Heart left ventricle (tissue), 16 donors: ENCODE measurements at regions of chr11 and their contacts with region 1.

Region 1: GRCh38 chr11:69888483-69889076 is 69.4 kb upstream of the FGF3 start:
- DNase-seq: peak in 2 of 5 donors; percentile 54 to 59
- ATAC-seq: peak in 2 of 4 donors; percentile 61 to 71
- H3K4me3 ChIP-seq: no peak overlapping the region
- H3K27ac ChIP-seq: no peak overlapping the region
- H3K4me1 ChIP-seq: peaks cover 0 to 8% (median 0%) of the 10 kb centered on the region in 12 donors
- H3K27me3 ChIP-seq: peaks cover 0 to 52% (median 16%) of the 10 kb centered on the region in 9 donors
- CTCF ChIP-seq: peak; percentile 74 to 95 (median 86)
- POLR2A ChIP-seq: no peak

Region 2: DNA sequence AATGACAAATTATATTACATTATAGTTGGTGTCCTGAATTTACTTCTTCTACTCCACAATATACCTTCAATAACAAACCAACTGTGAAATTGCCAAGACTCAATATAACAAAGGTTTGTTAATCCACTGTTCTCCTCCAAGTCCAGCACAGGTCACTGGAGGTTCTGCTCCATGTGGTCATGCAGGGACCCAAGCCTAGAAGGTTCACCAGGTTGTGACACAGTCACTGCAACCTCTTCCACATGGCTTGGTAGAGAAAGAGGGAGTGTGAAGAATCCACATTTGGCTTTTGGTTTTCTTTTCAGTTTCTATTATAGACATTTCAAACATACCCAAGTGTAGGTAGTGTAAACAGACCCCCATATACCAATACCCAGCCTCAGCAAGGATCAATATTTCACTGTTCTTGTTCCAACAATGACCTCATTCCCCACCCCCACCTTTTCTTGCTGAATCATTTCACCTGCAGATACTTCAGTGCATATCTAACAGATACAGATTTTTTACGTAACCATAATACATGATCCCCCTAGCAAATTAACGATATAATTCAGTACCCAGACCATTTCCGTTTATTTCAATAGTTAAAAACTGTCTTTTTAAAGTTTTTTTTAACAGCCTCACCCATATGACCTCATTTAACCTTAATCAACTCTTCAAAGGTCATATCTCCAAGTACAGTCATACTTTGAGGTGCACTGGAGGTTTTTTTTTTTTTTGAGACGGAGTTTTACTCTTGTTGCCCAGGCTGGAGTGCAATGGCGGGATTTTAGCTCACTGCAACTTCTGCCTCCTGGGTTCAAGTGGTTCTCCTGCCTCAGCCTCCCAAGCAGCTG is 198.9 kb before region 1 on chr11:
- intact Hi-C with region 1: loop called (anchors 1 to 5 kb)
- DNase-seq: no peak
- ATAC-seq: no peak
- H3K4me3 ChIP-seq: no peak overlapping the region
- H3K27ac ChIP-seq: no peak overlapping the region
- H3K4me1 ChIP-seq: peaks cover 0 to 7% (median 0%) of the 10 kb centered on the region in 12 donors
- H3K27me3 ChIP-seq: peaks cover 0 to 27% (median 3%) of the 10 kb centered on the region in 9 donors
- CTCF ChIP-seq: no peak
- POLR2A ChIP-seq: no peak

Region 3: DNA sequence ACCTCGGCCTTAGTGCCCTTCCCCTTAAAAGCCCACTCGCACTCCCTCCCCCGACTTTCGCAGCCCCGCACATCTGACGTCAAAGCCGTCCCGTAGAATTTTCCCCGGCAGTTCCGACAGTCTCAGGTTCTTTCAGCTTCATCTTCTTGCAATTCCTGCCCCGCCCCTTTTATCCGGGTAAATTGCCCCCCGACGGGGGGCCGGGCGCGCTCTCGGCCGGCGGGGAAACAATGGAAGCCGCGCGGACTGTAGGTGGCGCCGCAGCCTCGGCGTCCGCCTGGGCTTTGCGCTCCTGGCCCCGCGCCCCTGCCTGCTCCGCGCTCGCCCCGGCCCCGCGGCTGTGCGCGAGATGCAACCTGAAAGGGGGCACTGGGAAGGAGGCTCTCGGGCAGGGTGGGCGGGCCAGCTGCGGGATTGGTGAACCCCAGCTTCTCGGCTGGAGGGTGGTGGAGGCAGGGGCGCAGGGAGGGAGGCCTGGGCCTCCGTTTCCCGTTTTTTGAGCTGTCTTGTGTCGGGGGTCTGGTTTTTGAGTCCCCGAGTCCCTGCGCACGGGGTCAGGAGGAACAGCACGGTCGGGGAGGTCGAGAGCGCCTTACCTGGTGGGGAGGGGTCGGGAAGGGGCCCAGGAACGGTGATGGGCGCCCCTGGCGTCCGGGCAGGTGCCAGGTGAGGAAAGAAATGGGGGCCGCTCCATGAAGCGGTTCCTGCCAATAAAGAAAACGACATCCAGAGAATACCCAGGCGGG is 183.9 kb before region 1 on chr11:
- intact Hi-C with region 1: loop called in 4 of 10 experiments (anchors 2 to 5 kb)
- DNase-seq: no peak
- ATAC-seq: peak in 1 of 4 donors; percentile 70
- H3K4me3 ChIP-seq: peak overlapping the region in 8 of 12 donors; percentile 6 to 32 (median 18)
- H3K27ac ChIP-seq: no peak overlapping the region
- H3K4me1 ChIP-seq: peaks cover 0 to 40% (median 13%) of the 10 kb centered on the region in 12 donors
- H3K27me3 ChIP-seq: peaks cover 38 to 83% (median 59%) of the 10 kb centered on the region in 9 donors
- CTCF ChIP-seq: peak in 11 of 12 donors; percentile 21 to 57 (median 48)
- POLR2A ChIP-seq: no peak